ENCODE measurements at regions of chr6 and their contacts with region 1.

Region 1: DNA sequence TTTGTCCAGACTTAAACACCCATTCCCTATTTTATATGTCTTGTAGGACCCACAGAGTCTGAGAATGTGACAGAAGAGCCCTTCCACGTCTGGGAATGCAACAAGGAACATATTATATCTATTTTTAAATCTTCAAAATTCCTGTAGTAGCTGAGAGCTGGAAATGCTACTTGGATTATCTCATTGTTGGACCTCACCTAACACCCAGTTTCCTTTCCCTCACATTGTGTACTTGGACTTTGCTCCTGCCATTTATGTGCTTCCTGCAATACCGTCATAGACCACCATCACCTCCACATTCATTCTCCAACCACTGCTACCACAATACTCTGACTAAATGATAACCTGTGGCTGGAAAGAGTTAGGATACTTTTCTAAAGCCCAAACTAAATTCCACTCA is 335.4 kb downstream of the COL12A1 start:
- DNase-seq: peak; percentile 12 to 39
- H3K4me3 ChIP-seq: no peak overlapping the region
- H3K4me3 Mint-ChIP-seq: no peak overlapping the region
- H3K27ac Mint-ChIP-seq: no peak overlapping the region
- H3K4me1 ChIP-seq: peaks cover 7% of the 10 kb centered on the region
- H3K4me1 Mint-ChIP-seq: no peaks in the 10 kb centered on the region
- H3K27me3 ChIP-seq: no peaks in the 10 kb centered on the region
- H3K27me3 Mint-ChIP-seq: no peaks in the 10 kb centered on the region
- CTCF ChIP-seq: peak in 1 of 2 experiments; percentile 5

Region 2: GRCh38 chr6:74899416-74899815 is 29.0 kb after region 1 on chr6:
- CTCF ChIA-PET with region 1: no interaction called
- POLR2A ChIA-PET with region 1: interaction called, 14 read pairs
- intact Hi-C with region 1: no loop called
- DNase-seq: peak in 1 of 2 experiments; percentile 13
- H3K4me3 ChIP-seq: no peak overlapping the region
- H3K4me3 Mint-ChIP-seq: no peak overlapping the region
- H3K27ac Mint-ChIP-seq: no peak overlapping the region
- H3K4me1 ChIP-seq: no peaks in the 10 kb centered on the region
- H3K4me1 Mint-ChIP-seq: no peaks in the 10 kb centered on the region
- H3K27me3 ChIP-seq: no peaks in the 10 kb centered on the region
- H3K27me3 Mint-ChIP-seq: peaks cover 4% of the 10 kb centered on the region
- CTCF ChIP-seq: no peak

Measured in Caco-2 (cell line).